ENCODE measurements at regions of chr3 and their contacts with region 1.

Region 1: GRCh38 chr3:22565393-22565792 is 637.7 kb upstream of the UBE2E2 start:
- DNase-seq: no peak
- ATAC-seq: no peak
- H3K4me3 Mint-ChIP-seq: no peak overlapping the region
- H3K27ac Mint-ChIP-seq: no peak overlapping the region
- H3K4me1 Mint-ChIP-seq: no peaks in the 10 kb centered on the region
- H3K27me3 Mint-ChIP-seq: no peaks in the 10 kb centered on the region
- CTCF ChIP-seq: no peak

Region 2: GRCh38 chr3:20729185-20729584 is 1836.2 kb before region 1 on chr3:
- CTCF ChIA-PET with region 1: no interaction called
- POLR2A ChIA-PET with region 1: no interaction called
- intact Hi-C with region 1: no loop called
- DNase-seq: no peak
- ATAC-seq: no peak
- H3K4me3 Mint-ChIP-seq: no peak overlapping the region
- H3K27ac Mint-ChIP-seq: no peak overlapping the region
- H3K4me1 Mint-ChIP-seq: no peaks in the 10 kb centered on the region
- H3K27me3 Mint-ChIP-seq: no peaks in the 10 kb centered on the region
- CTCF ChIP-seq: no peak

Region 3: GRCh38 chr3:22887664-22888291 is 322.4 kb after region 1 on chr3:
- CTCF ChIA-PET with region 1: interaction called, 3 read pairs
- POLR2A ChIA-PET with region 1: no interaction called
- intact Hi-C with region 1: loop called (anchors 2 kb)
- DNase-seq: no peak
- ATAC-seq: no peak
- H3K4me3 Mint-ChIP-seq: no peak overlapping the region
- H3K27ac Mint-ChIP-seq: no peak overlapping the region
- H3K4me1 Mint-ChIP-seq: no peaks in the 10 kb centered on the region
- H3K27me3 Mint-ChIP-seq: peaks cover 19% of the 10 kb centered on the region
- CTCF ChIP-seq: no peak

Region 4: GRCh38 chr3:23113455-23114171 is 548.2 kb after region 1 on chr3:
- CTCF ChIA-PET with region 1: no interaction called
- POLR2A ChIA-PET with region 1: no interaction called
- intact Hi-C with region 1: no loop called
- DNase-seq: no peak
- ATAC-seq: peak; percentile 37
- H3K4me3 Mint-ChIP-seq: peak overlapping the region; percentile 8
- H3K27ac Mint-ChIP-seq: peak overlapping the region; percentile 16
- H3K4me1 Mint-ChIP-seq: peaks cover 24% of the 10 kb centered on the region
- H3K27me3 Mint-ChIP-seq: peaks cover 4% of the 10 kb centered on the region
- CTCF ChIP-seq: no peak

Region 5: DNA sequence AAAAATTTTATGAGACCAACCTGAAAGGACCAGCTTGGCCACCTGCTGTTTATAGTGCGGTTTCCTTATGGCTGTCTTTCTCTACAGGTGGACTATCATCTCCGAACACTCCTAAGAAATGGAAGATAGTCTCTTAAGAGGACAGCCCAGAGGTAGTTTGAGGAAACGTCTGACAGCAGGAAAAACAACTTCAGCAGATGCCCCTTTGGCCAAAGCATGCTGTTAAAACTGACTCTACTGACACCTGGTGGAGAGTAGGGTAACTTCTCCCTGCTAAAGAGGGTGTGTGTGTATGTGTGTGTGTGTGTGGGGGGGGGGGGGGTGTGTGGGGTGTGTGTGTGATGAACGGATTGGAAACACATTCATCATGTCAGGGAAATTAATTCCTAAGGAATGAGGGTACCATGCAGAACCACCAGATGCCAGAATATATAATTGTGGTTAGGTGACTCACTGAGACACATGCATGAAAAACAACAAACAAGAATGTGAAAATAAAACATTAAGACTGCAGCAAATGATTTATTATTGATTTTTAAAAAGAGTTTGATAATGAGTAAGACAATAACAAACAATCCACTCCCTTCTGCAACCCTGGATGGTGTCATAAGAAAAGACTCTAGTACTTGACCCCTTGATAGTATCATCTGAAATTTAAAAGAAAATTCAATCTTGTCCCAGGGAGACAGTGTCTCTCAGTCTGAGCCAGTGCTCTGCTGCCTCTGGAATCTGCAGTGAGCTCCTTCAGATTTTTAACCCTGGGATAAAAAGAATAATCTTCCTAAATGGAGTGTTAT is 1672.8 kb after region 1 on chr3:
- CTCF ChIA-PET with region 1: no interaction called
- POLR2A ChIA-PET with region 1: no interaction called
- intact Hi-C with region 1: loop called (anchors 5 kb)
- DNase-seq: no peak
- ATAC-seq: peak; percentile 75
- H3K4me3 Mint-ChIP-seq: no peak overlapping the region
- H3K27ac Mint-ChIP-seq: no peak overlapping the region
- H3K4me1 Mint-ChIP-seq: no peaks in the 10 kb centered on the region
- H3K27me3 Mint-ChIP-seq: no peaks in the 10 kb centered on the region
- CTCF ChIP-seq: no peak

Measured in activated B cell treated with CpG ODN at 0.5 μM for 24 hours (primary cell).